ENCODE measurements at regions of chr6 and their contacts with region 1.

Region 1: GRCh38 chr6:24855395-24856245 is 56.9 kb upstream of the ARMH2 start:
- DNase-seq: peak in 6 of 10 donors; percentile 30 to 65 (median 54)
- H3K4me3 ChIP-seq: peak overlapping the region in 10 of 59 donors; percentile 2 to 24 (median 18)
- H3K27ac ChIP-seq: peak overlapping the region in 7 of 59 donors; percentile 17 to 72 (median 47)
- H3K27me3 ChIP-seq: peaks cover 0 to 14% (median 0%) of the 10 kb centered on the region in 45 donors
- CTCF ChIP-seq: peak; percentile 69 to 95 (median 90)

Region 2: DNA sequence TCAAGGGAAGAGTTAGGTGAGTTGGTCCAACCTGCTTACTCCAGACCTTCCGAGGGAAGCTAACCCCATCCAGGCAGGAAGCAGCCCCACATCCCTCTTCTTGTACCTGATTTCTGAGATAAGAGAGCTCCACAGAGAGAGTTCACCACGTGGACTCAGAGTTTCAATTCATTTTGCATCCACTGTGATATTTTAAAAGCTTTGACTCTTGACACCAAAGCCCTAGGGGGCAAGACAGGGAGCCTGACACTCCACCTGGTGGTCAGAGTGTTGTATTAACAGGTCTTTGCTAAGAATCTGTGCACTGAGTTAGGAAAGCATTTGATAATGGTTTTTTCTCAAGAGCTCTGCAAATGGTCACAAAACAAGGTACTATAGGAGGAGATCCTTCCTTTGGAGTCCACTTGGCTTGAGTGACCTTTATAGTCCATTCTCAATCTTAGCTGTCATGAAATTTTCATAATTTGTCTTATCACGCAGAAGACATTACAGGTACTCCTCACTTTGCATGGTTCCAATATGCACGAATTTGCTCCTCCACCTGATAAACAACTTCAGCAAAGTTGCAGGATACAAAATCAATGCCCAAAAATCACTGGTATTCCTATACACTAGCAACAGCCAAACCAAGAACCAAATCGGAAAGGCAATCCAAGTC is 136.3 kb after region 1 on chr6:
- intact Hi-C with region 1: loop called in 1 of 2 experiments (anchors 10 kb)
- DNase-seq: no peak
- H3K4me3 ChIP-seq: no peak overlapping the region
- H3K27ac ChIP-seq: no peak overlapping the region
- H3K27me3 ChIP-seq: no peaks in the 10 kb centered on the region
- CTCF ChIP-seq: peak in 55 of 56 donors; percentile 25 to 77 (median 56)

Region 3: DNA sequence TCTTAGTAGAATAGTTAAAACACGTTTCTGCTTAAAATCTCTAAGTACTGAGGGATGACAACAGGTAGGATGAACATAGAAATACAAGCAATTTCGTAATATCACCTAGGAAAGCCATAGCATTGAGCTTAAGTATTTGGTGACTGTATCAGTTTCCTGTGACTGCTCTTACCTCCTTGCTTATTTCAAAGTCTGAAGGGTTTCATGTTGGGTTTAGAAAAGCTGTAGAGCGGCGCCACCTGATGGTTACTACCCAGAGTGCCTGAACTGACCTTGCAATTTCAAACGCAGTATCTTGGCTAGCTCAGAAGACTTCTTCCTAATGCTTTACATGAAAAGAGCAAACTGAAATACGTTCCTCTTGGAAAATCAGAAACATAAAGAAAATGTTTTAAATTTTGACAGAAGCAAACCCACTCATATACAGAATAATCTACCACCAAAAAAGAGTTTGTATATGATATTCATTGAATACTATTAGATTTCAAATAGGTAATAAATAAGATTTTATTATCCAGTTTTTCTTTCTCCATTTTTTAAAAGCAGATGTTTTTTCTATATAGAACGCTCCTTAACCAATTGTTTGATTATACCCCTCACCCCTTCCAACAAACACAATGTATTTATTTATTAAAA is 162.4 kb after region 1 on chr6:
- intact Hi-C with region 1: loop called in 1 of 2 experiments (anchors 5 kb)
- DNase-seq: peak in 3 of 10 donors; percentile 31 to 47 (median 36)
- H3K4me3 ChIP-seq: no peak overlapping the region
- H3K27ac ChIP-seq: no peak overlapping the region
- H3K27me3 ChIP-seq: peaks cover 0 to 25% (median 0%) of the 10 kb centered on the region in 45 donors
- CTCF ChIP-seq: peak in 51 of 56 donors; percentile 14 to 64 (median 39)

Region 4: GRCh38 chr6:25070547-25071366 is 215.1 kb after region 1 on chr6:
- intact Hi-C with region 1: loop called (anchors 2 to 5 kb)
- DNase-seq: peak; percentile 42 to 89 (median 73)
- H3K4me3 ChIP-seq: peak overlapping the region in 6 of 59 donors; percentile 4 to 33 (median 26)
- H3K27ac ChIP-seq: no peak overlapping the region
- H3K27me3 ChIP-seq: peaks cover 0 to 28% (median 0%) of the 10 kb centered on the region in 45 donors
- CTCF ChIP-seq: peak; percentile 74 to 99 (median 95)

Measured in dorsolateral prefrontal cortex (tissue), 120 donors.